A673 (cell line): ENCODE measurements at regions of chr5 and their contacts with region 1.

Region 1: DNA sequence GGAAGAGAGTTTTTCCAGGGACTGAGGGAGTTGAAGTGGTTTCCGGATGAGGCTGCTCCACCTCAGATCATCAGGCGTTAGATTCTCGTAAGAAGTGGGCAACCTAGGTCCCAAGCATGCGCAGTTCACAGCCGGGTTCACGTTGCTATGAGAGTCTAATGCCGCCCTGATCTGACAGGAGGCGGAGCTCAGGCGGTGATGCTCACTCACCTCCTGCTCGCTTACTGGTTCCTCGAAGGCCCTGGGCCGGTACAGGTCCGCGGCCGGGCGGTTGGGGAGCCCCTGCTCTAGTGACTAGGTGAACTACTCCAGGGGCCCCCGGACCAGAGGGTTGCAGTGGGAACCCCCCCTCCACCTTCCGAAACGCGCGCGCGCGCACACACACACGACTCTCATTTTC is 997 bp upstream of the RNF130 start:
- DNase-seq: no peak
- H3K4me3 ChIP-seq: no peak overlapping the region
- H3K27ac ChIP-seq: no peak overlapping the region
- H3K4me1 ChIP-seq: peaks cover 25% of the 10 kb centered on the region
- H3K27me3 ChIP-seq: no peaks in the 10 kb centered on the region
- CTCF ChIP-seq: no peak

Region 2: GRCh38 chr5:180090098-180090768 is 17.7 kb after region 1 on chr5:
- CTCF ChIA-PET with region 1: no interaction called
- POLR2A ChIA-PET with region 1: interaction called, 16 read pairs
- intact Hi-C with region 1: no loop called
- DNase-seq: peak; percentile 75
- H3K4me3 ChIP-seq: peak overlapping the region; percentile 52
- H3K27ac ChIP-seq: peak overlapping the region; percentile 40
- H3K4me1 ChIP-seq: no peaks in the 10 kb centered on the region
- H3K27me3 ChIP-seq: no peaks in the 10 kb centered on the region
- CTCF ChIP-seq: peak; percentile 71